Common myeloid progenitor, CD34-positive (primary cell): ENCODE measurements at regions of chr4 and their contacts with region 1.

Region 1: GRCh38 chr4:22897520-22898108 is 204.9 kb downstream of the GBA3 start:
- DNase-seq: peak; percentile 36 to 63 (median 51)
- H3K4me3 ChIP-seq: no peak overlapping the region
- H3K27ac ChIP-seq: no peak overlapping the region
- H3K4me1 ChIP-seq: peaks cover 0 to 12% (median 9%) of the 10 kb centered on the region in 4 experiments
- H3K27me3 ChIP-seq: no peaks in the 10 kb centered on the region

Region 2: GRCh38 chr4:22551550-22551949 is 346.1 kb before region 1 on chr4:
- CTCF ChIA-PET with region 1: no interaction called
- POLR2A ChIA-PET with region 1: no interaction called
- DNase-seq: peak; percentile 1 to 40 (median 23)
- H3K4me3 ChIP-seq: no peak overlapping the region
- H3K27ac ChIP-seq: no peak overlapping the region
- H3K4me1 ChIP-seq: no peaks in the 10 kb centered on the region
- H3K27me3 ChIP-seq: no peaks in the 10 kb centered on the region

Region 3: DNA sequence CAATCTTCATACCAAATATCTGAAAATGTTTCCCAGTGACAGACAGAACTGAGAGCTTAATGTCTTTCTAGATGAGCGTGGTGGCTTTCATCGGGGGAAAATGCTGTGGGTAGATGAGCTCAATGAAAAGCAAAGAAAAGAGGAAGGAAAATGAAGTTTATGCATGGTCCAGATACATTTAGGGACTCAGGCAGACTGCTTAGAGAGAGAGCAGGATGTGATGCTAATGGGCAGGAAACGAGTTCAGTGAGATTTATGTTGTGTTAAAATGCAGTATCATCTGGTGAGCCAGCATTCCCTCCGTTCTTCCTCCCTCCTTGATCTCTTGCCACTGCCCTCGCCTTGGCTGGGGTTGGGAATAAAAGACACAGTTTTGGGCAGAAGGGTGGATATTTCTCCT is 24.3 kb after region 1 on chr4:
- CTCF ChIA-PET with region 1: interaction called, 14 read pairs
- POLR2A ChIA-PET with region 1: no interaction called
- DNase-seq: peak; percentile 79 to 96 (median 93)
- H3K4me3 ChIP-seq: peak overlapping the region in 1 of 7 experiments; percentile 20
- H3K27ac ChIP-seq: peak overlapping the region in 1 of 2 experiments; percentile 39
- H3K4me1 ChIP-seq: peaks cover 0 to 14% (median 6%) of the 10 kb centered on the region in 4 experiments
- H3K27me3 ChIP-seq: no peaks in the 10 kb centered on the region